Dorsolateral prefrontal cortex (tissue), 120 donors: ENCODE measurements at regions of chr20 and their contacts with region 1.

Region 1: DNA sequence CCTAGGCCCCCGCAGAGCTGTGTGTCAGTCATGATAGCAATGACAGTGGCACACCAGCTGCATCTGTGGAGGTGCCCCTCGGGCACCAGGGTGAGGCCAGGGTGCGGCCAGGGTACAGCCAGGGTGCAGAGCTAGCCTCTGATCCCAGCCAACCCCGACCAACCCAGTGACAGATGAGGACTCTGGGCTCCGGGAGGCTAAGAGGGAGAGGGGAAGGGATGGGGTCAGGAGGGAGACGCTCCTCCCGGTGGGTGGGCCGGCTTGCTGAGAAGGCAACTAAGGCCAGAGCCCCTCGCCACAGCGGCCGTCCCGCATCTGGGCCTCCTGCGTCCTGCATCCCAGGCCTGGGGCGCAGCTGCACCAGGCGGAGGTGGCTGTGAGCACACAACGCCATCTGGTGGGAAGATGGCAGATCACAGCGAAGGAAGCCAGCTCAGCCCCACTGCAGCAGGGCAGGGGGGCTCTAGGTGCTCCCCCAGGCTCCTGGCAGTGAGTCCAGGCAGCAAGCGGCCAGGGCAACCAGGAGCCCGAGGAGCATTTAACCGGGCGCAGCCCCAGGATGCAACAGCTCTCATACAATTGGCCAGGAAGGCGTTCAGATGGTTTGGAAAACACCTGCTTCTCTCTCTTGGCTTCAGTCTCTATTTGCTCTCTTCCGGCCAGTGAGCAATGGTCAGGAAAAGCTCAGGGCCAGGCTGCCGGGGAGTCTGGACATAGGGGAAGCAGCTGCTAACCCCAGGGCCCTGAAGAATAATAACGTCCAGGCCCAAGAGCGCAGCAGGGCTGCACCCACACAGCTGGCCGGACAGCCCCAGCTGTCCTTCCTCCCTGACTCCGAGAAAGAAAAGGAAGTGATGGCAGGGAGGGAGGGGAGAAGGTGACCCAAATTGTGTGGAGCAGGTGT is 169.4 kb downstream of the TAF4 start:
- DNase-seq: peak in 8 of 10 donors; percentile 25 to 76 (median 51)
- H3K4me3 ChIP-seq: no peak overlapping the region
- H3K27ac ChIP-seq: peak overlapping the region in 3 of 59 donors; percentile 16 to 38 (median 21)
- H3K27me3 ChIP-seq: peaks cover 0 to 7% (median 0%) of the 10 kb centered on the region in 45 donors
- CTCF ChIP-seq: peak; percentile 25 to 92 (median 83)

Region 2: GRCh38 chr20:61234803-61235113 is 661.6 kb before region 1 on chr20:
- intact Hi-C with region 1: loop called in 1 of 2 experiments (anchors 10 kb)
- DNase-seq: no peak
- H3K4me3 ChIP-seq: no peak overlapping the region
- H3K27ac ChIP-seq: no peak overlapping the region
- H3K27me3 ChIP-seq: peaks cover 0 to 21% (median 0%) of the 10 kb centered on the region in 45 donors
- CTCF ChIP-seq: no peak

Region 3: GRCh38 chr20:61263084-61263695 is 633.1 kb before region 1 on chr20:
- intact Hi-C with region 1: loop called in 1 of 2 experiments (anchors 10 kb)
- DNase-seq: peak in 2 of 10 donors; percentile 31 to 57
- H3K4me3 ChIP-seq: no peak overlapping the region
- H3K27ac ChIP-seq: peak overlapping the region in 5 of 59 donors; percentile 11 to 37 (median 22)
- H3K27me3 ChIP-seq: peaks cover 0 to 6% (median 0%) of the 10 kb centered on the region in 45 donors
- CTCF ChIP-seq: peak; percentile 46 to 91 (median 77)